ENCODE measurements at regions of chr2 and their contacts with region 1.

Region 1: GRCh38 chr2:19901442-19902215 is at the start of gene TTC32:
- DNase-seq: peak; percentile 95
- ATAC-seq: peak; percentile 88
- H3K4me3 Mint-ChIP-seq: peak within 1 kb of the TSS; percentile 93
- H3K27ac Mint-ChIP-seq: peak within 1 kb of the TSS; percentile 96
- H3K4me1 Mint-ChIP-seq: peaks cover 28% of the 10 kb centered on the region
- H3K27me3 Mint-ChIP-seq: peaks cover 3% of the 10 kb centered on the region
- total RNA-seq, gene TTC32: 41.2 to 43.5 TPM

Region 2: GRCh38 chr2:19868705-19869580 is 32.7 kb before region 1 on chr2:
- POLR2A ChIA-PET with region 1: interaction called, 26 read pairs
- DNase-seq: peak; percentile 78
- ATAC-seq: peak; percentile 96
- H3K4me3 Mint-ChIP-seq: peak overlapping the region; percentile 95
- H3K27ac Mint-ChIP-seq: peak overlapping the region; percentile 95
- H3K4me1 Mint-ChIP-seq: peaks cover 13% of the 10 kb centered on the region
- H3K27me3 Mint-ChIP-seq: no peaks in the 10 kb centered on the region

Region 3: DNA sequence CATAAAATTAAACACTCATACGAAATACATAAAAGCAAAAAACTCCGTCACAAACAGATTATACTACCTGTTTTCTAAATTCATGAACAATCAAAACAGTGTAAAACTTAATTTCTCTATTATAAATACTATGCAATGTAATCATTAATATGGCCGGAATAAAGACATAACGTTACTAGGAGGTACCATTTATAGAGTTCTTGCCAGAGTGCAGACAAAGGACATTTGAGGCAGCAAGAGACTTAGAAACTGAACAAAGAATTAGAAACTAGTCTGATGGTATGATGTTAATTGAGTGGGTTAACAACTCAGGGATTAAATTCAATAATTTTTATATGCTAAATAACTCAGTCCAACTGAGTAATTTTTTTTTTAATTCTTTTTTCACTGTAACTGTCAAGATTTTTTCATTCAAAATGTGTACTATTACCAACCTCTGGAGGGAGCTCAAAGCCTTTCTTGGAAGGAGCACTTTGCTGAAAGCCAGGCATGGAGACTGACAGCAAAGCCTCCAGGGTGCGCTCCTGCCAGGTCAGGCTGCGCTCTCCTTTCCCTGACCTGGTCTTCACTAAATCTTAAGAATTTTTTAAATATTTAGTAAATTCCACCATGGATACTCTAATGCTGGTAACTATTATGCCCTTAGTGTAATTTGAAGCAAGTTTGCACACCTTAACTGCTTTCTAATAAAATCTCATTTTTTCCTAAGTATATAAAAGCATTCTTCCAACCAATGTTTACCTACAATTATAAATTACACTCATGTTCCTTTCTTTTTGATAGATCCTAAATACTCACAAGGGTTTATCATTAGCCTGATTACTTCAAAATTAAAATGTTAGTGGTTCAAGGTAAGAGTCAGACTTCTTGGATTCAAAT is 54.2 kb after region 1 on chr2:
- POLR2A ChIA-PET with region 1: no interaction called
- DNase-seq: peak; percentile 32
- ATAC-seq: peak; percentile 86
- H3K4me3 Mint-ChIP-seq: no peak overlapping the region
- H3K27ac Mint-ChIP-seq: no peak overlapping the region
- H3K4me1 Mint-ChIP-seq: no peaks in the 10 kb centered on the region
- H3K27me3 Mint-ChIP-seq: no peaks in the 10 kb centered on the region

Region 4: DNA sequence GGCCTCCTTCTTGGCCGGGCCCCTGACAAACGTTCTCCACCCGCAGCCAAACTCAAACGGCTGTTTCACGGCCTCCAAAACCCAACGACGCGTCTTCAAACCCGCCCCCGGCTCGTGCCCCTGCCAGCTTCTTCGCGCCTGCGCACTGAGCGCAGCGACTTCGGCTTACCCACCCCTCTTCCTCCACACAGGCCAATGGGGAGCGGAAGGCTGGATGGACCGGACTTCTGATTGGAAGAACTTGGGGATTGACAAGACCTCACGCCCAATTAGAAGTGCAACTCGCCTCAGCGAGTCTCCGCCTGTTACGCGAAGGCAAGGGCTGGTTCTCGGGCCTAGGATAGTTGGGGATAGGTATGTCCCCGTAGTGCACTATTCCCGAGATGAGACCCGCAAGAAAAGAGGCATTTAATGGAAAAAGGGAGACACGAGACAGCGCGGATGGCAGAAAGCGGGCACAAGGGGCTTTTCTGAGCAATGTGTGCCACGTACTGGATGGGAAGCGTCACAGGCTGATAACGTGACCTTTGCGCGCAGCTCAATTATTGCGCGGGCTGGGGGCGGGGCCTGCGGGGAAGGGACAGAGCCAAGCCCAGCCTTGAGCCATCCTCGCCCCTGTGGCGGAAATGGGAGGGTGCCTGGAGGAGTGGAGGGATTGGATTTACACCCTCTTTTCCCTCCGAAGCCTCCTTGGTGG is 150.1 kb after region 1 on chr2 and contains the start of gene LAPTM4A:
- POLR2A ChIA-PET with region 1: interaction called, 11 read pairs
- DNase-seq: peak; percentile 95
- ATAC-seq: peak; percentile 97
- H3K4me3 Mint-ChIP-seq: no peak within 1 kb of the TSS
- H3K27ac Mint-ChIP-seq: no peak within 1 kb of the TSS
- H3K4me1 Mint-ChIP-seq: peaks cover 21% of the 10 kb centered on the region
- H3K27me3 Mint-ChIP-seq: peaks cover 14% of the 10 kb centered on the region
- total RNA-seq, gene LAPTM4A: 27.2 to 31.8 TPM

Measured in activated naive CD8-positive, alpha-beta T cell treated with anti-CD3 and anti-CD28 coated beads, Interleukin-2, amount 10 ng/mL, durations not matched to agents 7 days and 5 days (primary cell).